Calu3 (cell line): ENCODE measurements at regions of chr3 and their contacts with region 1.

Region 1: DNA sequence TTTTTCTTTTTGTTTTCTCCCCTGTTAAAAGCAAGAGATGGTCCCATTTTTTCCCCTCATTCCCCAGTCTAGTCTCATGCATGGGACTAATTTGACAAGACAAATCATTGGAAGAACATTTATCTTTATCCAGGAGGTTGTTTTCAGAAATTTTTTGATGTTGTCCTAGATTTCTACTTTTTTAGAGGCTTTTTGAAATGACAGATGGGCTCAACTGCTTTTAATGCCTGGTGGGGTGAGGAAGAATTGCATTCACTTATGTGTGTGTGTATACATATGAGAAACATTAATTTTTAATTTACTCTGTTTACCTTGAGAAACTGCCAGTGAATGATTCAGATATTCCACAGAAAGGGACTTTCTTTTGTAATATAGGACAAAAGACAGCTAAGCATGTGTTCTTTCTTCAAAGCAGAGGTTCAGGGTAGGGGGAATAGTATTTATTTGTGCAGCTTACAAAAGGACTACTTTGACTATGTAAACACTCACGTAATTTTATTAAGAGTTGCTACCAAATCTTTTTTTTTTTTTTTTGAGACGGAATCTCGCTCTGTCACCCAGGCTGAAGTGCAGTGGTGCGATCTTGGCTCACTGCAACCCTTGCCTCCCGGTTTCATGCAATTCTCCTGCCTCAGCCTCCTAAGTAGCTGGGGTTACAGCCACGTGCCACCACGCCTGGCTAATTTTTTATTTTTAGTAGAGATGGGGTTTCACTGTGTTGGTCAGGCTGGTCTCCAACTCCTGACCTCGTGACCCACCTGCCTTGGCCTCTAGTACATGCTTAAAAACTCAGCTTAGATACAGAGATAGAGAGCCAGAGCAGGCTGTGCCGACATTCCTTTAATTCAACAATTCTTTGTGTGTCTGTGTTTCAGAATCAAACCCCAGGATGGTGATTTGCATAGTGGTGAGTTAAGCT is 130.1 kb upstream of the RARB start:
- DNase-seq: peak; percentile 25
- H3K4me3 Mint-ChIP-seq: peak overlapping the region; percentile 40
- H3K27ac Mint-ChIP-seq: peak overlapping the region; percentile 87
- H3K4me1 Mint-ChIP-seq: peaks cover 44% of the 10 kb centered on the region
- H3K27me3 Mint-ChIP-seq: no peaks in the 10 kb centered on the region
- CTCF ChIP-seq: no peak

Region 2: DNA sequence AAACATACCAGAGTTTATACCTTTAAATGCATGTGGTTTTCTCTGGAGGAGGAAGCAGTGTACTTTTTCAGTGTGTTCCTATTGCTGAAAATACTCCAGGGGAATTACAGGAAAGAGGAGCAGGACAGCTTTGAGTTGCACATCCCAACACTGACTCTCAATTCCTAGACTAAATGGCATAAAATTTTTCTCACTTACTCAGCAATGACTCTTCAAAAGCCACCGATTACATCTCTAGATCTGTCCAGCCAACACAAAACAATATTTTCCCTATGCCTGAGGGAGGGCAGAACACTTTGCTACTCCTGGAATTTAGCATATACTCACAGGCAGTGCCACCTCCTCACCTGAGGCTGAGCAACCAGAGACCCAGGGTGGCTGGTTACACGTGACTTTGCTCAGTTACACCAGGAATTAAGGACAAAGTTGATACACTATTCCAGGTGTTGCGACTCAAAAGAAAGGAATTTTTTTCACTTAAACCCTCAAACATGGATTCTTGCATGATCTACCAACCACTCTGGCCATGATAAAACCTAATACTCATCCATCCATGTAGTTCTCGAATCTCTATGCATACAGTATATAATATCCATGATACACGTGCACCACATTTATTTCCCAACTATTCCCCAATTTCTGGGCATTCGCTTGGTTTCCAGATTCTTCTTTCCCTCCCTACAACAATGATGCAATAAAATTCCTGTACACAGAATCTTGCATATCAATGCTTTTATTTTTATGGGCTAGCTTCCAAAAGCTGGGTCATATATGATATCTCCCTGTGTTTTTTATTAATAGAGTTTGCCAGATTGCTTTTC is 997.9 kb before region 1 on chr3:
- CTCF ChIA-PET with region 1: no interaction called
- intact Hi-C with region 1: no loop called
- DNase-seq: peak; percentile 34
- H3K4me3 Mint-ChIP-seq: no peak overlapping the region
- H3K27ac Mint-ChIP-seq: peak overlapping the region; percentile 73
- H3K4me1 Mint-ChIP-seq: peaks cover 21% of the 10 kb centered on the region
- H3K27me3 Mint-ChIP-seq: no peaks in the 10 kb centered on the region
- CTCF ChIP-seq: no peak

Region 3: DNA sequence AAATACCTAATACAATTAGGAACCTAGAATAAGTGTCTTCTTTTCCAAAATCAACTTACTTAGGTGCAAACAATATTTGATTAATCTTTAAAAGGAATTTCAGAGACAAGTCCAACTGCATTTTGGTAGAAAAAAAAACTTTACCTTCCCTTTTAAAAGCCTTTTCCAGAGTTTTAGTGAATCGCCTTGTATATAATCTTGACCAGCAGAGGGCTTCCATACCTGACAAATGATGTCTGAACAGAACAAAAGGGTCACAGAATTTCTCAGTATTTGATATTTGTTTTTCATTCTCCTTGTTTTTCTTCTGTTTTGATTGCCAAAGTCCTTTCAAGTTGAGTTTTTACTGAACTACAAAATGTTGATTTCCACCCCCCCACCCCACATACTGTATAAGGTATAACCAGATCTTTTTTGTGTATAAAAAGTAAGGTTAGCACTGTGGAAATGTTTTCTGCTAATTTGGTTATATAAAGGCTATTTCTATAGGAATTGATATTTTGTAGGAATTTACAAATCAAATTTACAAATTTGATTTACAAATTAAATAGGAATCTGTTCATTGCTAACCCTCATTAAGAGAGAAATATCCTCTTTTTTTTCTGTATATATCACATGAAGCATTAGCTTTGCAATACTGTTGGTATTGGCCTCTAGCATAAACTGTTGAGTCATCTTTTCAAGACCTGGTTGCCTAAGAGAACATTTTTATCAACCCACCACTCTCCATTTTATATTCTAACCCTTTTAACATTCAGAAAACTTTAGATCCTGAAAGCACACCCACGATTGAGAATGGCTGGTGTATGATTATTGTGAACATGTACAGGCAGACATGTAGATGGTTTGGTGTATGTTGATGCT is 333.9 kb before region 1 on chr3:
- CTCF ChIA-PET with region 1: no interaction called
- intact Hi-C with region 1: loop called (anchors 10 kb)
- DNase-seq: peak; percentile 7
- H3K4me3 Mint-ChIP-seq: no peak overlapping the region
- H3K27ac Mint-ChIP-seq: no peak overlapping the region
- H3K4me1 Mint-ChIP-seq: peaks cover 13% of the 10 kb centered on the region
- H3K27me3 Mint-ChIP-seq: no peaks in the 10 kb centered on the region
- CTCF ChIP-seq: no peak

Region 4: GRCh38 chr3:25156626-25157025 is 141.3 kb before region 1 on chr3:
- CTCF ChIA-PET with region 1: interaction called, 4 read pairs
- intact Hi-C with region 1: loop called (anchors 10 kb)
- DNase-seq: peak; percentile 32
- H3K4me3 Mint-ChIP-seq: no peak overlapping the region
- H3K27ac Mint-ChIP-seq: no peak overlapping the region
- H3K4me1 Mint-ChIP-seq: peaks cover 25% of the 10 kb centered on the region
- H3K27me3 Mint-ChIP-seq: no peaks in the 10 kb centered on the region
- CTCF ChIP-seq: no peak

Region 5: GRCh38 chr3:26058901-26059321 is 761.0 kb after region 1 on chr3:
- CTCF ChIA-PET with region 1: no interaction called
- intact Hi-C with region 1: no loop called
- DNase-seq: no peak
- H3K4me3 Mint-ChIP-seq: no peak overlapping the region
- H3K27ac Mint-ChIP-seq: no peak overlapping the region
- H3K4me1 Mint-ChIP-seq: no peaks in the 10 kb centered on the region
- H3K27me3 Mint-ChIP-seq: no peaks in the 10 kb centered on the region
- CTCF ChIP-seq: no peak